ENCODE measurements at regions of chr19 and their contacts with region 1.

Region 1: DNA sequence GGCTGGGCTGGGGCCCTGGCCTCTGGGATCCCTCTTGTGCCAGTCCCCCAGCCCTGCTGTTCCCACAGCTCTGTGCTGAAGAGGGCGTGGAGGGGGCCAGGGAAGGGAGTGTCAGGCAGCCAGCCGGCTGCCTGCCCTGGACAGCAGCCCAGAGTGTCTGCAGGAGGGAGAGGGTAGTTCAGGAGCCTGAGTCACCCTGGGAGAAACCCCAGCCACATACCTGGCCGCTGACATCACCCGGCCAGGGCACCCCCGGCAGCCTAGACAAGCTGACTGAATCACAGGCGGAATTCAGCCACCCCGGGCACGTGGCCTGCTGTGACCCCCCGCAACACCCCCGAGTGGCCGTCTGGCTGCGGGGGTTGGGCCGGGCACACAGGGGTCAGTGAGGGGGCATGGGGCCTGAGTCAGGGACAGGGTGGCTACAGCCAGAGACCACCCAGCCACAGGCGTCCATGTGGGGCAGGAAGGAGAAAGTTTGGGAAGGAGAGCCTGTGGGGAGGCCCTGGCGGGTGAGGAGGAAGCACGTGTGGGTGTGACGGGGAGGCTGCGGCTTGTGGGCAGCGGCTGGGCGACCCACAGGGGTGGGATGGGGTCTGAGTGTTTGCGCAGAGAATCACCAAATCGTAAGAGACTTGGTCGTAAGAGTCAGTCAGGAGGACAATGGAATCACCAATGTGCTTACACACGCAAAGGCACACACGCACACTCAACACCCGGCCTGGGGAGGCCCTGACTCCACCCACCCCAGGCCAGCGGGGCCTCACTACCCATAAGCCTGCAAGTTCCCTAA is 11.9 kb upstream of the FOSB start:
- DNase-seq: peak; percentile 98
- H3K4me3 ChIP-seq: peak overlapping the region; percentile 53; the same call in 1 of the 2 replicates
- H3K27ac ChIP-seq: peak overlapping the region; percentile 93
- H3K4me1 ChIP-seq: peaks cover 38% of the 10 kb centered on the region
- H3K27me3 ChIP-seq: no peaks in the 10 kb centered on the region
- CTCF ChIP-seq: no peak

Region 2: DNA sequence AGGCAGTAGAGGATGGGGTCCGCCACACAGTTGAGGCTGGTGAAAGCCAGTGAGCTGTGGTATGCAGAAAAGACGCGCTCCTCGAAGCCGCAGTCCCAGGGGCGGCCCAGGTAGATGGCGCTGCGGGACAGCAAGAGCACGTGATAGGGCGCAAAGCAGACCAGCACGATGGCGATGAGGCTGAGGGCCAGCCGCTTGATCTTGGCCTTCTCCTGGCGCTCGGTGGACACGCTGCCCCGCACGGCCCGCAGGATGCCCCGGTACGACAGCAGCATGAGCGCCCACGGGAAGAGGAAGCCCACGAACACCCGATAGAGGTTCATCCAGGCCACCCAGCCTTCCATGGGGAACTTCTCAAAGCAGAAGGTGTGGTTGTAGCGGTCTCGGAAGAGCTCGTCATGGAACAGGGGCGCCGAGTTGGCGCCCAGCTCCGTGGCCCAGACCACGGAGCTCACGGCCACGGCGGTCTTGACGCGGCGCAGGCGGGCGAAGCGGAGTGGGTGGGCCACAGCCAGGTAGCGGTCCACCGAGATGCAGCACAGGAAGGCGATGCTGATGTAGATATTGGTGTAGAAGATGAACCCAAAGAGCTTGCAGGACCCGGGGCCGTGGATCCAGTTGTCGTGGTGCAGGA is 135.2 kb after region 1 on chr19:
- CTCF ChIA-PET with region 1: no interaction called
- POLR2A ChIA-PET with region 1: interaction called, 19 read pairs
- intact Hi-C with region 1: no loop called
- DNase-seq: peak; percentile 30 to 62
- H3K4me3 ChIP-seq: no peak overlapping the region
- H3K27ac ChIP-seq: no peak overlapping the region
- H3K4me1 ChIP-seq: no peaks in the 10 kb centered on the region
- H3K27me3 ChIP-seq: no peaks in the 10 kb centered on the region
- CTCF ChIP-seq: peak; percentile 49

Region 3: DNA sequence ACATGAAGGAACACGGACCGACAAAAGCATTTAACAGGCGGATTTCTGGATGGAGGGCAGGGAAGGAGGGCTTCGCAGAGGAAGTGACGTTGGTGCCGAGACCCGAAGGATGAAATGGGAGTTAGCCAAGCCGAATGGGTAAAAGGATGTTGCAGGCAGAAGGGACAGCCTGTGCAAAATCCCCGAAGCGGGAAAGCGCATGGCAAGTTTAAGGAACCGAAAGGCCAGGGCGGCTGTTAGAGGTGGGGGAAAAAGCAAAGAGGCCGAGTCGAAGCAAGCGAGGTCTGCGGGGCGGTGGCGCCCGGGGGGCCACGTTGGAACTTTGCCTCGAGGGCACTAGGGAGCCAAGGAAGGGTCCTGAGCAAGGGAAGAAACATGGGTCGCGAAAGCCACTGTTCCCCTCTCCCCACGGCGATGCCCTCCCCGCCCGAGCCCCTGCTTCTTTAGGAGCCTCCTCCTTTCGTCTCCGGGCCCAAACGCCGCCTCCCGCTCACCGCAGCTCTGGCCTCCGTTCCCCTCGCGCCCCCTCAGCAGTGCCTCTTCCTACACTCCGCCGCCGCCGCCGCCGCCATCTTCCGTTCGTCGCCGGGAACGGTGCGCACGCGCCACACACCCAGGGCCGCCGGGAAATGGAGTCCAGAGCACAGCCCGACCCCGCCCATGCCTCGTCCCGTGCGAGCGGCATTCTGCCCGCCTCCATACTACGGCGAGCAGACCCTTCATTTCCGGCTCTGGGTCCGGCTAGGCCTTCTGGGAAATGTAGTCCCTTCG is 406.8 kb after region 1 on chr19 and contains the start of gene SYMPK:
- CTCF ChIA-PET with region 1: no interaction called
- POLR2A ChIA-PET with region 1: interaction called, 10 read pairs
- intact Hi-C with region 1: no loop called
- DNase-seq: peak; percentile 97
- H3K4me3 ChIP-seq: peak within 1 kb of the TSS; percentile 67
- H3K27ac ChIP-seq: peak within 1 kb of the TSS; percentile 30
- H3K4me1 ChIP-seq: peaks cover 15% of the 10 kb centered on the region
- H3K27me3 ChIP-seq: peaks cover 41% of the 10 kb centered on the region
- CTCF ChIP-seq: no peak; the same call in 1 of the 2 replicates
- total RNA-seq, gene SYMPK: 85.5 and 121 TPM in 2 replicates

Measured in PC-9 (cell line).